ENCODE measurements at regions of chr6 and their contacts with region 1.

Region 1: DNA sequence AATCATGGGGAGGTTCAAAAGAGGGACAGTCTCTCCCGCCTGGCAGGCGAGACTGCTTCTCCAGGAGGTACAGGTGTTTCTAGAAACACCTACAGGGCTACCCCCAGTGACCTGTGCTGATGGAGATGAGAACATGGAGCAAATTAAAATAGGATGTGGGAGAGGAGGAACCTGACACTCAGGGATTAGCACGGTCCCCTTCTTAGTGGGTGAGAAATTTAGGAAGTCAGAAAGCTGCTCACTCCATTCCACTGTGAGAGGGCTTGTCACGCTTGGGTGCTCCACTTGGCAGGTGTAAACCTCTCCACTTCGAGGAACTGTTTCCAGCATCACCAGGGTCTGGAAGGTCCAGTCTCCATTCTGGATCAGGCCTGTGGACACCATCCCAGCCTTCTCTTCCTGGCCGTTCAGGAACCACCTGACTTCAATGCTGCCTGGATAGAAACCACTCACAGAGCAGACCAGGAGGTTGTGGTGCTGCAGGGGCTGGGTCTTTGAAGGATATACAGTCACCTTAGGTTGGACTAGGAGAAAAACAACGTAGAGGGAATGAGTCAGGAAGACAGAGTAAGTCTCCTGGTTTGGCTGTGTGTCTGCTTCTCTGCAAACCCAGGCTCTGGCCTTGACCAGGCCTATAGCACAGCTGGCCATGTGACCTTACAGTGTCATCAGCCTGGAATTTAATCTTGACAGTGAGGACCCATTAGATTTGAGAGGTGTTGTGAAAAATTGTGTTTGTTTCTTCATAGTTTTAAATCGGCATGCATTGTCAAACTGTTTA is 8.1 kb downstream of the HLA-DRB1 start:
- DNase-seq: no peak
- H3K4me3 ChIP-seq: no peak overlapping the region
- H3K27ac ChIP-seq: no peak overlapping the region
- H3K4me1 ChIP-seq: no peaks in the 10 kb centered on the region
- H3K27me3 ChIP-seq: no peaks in the 10 kb centered on the region
- CTCF ChIP-seq: no peak

Region 2: DNA sequence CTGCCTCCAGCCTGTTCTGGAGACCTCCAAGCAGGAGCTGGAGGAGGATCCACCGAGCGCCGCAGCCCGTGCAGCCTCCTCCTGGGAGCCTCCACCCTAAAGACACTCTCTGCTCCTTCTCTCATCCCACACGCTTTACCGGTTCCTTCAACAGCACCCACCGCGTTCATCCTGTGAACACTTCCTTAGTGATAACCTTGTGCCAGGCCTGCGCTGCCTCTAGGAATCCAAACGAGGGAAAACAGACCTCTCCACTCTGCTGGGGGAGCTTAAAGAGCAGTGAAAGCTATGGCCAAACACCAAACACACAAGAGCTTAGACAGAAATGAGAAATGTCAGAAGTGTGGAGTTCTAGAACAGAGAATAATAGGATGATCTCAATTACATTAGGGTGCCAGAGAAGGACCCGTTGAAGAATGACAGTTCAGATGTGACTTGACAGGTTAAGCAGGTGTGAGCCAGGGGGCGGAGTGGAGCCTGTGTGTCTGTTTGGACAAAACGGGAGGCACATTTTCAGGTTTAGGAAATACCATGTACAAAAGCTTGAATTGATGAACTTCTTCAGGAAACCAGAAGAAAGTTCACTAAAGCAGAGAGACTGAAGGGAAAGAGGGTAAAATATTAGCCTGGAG is 23.0 kb before region 1 on chr6:
- CTCF ChIA-PET with region 1: interaction called, 3 read pairs
- dilution Hi-C with region 1: no loop called
- in situ Hi-C with region 1: no loop called
- intact Hi-C with region 1: loop called (anchors 1 kb)
- DNase-seq: no peak
- H3K4me3 ChIP-seq: no peak overlapping the region
- H3K27ac ChIP-seq: no peak overlapping the region
- H3K4me1 ChIP-seq: no peaks in the 10 kb centered on the region
- H3K27me3 ChIP-seq: no peaks in the 10 kb centered on the region
- CTCF ChIP-seq: no peak

Region 3: DNA sequence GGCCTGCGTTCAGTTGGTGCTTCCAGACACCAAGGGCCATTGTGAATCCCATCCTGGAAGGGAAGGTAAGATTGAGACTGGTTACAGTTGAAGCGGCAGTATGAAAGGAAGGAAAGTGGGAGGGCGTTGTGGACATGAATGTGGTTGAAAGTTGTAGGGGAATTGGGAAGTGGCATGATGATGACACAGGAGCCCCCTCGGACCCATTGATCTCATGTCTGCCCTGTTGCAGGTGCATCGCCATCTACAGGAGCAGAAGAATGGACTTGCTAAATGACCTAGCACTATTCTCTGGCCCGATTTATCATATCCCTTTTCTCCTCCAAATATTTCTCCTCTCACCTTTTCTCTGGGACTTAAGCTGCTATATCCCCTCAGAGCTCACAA is 61.2 kb after region 1 on chr6:
- CTCF ChIA-PET with region 1: no interaction called
- dilution Hi-C with region 1: no loop called
- in situ Hi-C with region 1: no loop called
- intact Hi-C with region 1: no loop called
- DNase-seq: no peak
- H3K4me3 ChIP-seq: no peak overlapping the region
- H3K27ac ChIP-seq: no peak overlapping the region
- H3K4me1 ChIP-seq: no peaks in the 10 kb centered on the region
- H3K27me3 ChIP-seq: peaks cover 3% of the 10 kb centered on the region
- CTCF ChIP-seq: no peak